ENCODE measurements at regions of chr2 and their contacts with region 1.

Region 1: GRCh38 chr2:157468931-157469708 is 25.2 kb upstream of the CYTIP start:
- DNase-seq: no peak
- ATAC-seq: peak; percentile 76
- H3K4me3 Mint-ChIP-seq: peak overlapping the region; percentile 72
- H3K27ac Mint-ChIP-seq: peak overlapping the region; percentile 99
- H3K4me1 Mint-ChIP-seq: peaks cover 96% of the 10 kb centered on the region
- H3K27me3 Mint-ChIP-seq: no peaks in the 10 kb centered on the region

Region 2: GRCh38 chr2:157377861-157378260 is 91.3 kb before region 1 on chr2:
- CTCF ChIA-PET with region 1: no interaction called
- POLR2A ChIA-PET with region 1: no interaction called
- DNase-seq: no peak
- ATAC-seq: no peak
- H3K4me3 Mint-ChIP-seq: no peak overlapping the region
- H3K27ac Mint-ChIP-seq: no peak overlapping the region
- H3K4me1 Mint-ChIP-seq: peaks cover 6% of the 10 kb centered on the region
- H3K27me3 Mint-ChIP-seq: no peaks in the 10 kb centered on the region

Region 3: DNA sequence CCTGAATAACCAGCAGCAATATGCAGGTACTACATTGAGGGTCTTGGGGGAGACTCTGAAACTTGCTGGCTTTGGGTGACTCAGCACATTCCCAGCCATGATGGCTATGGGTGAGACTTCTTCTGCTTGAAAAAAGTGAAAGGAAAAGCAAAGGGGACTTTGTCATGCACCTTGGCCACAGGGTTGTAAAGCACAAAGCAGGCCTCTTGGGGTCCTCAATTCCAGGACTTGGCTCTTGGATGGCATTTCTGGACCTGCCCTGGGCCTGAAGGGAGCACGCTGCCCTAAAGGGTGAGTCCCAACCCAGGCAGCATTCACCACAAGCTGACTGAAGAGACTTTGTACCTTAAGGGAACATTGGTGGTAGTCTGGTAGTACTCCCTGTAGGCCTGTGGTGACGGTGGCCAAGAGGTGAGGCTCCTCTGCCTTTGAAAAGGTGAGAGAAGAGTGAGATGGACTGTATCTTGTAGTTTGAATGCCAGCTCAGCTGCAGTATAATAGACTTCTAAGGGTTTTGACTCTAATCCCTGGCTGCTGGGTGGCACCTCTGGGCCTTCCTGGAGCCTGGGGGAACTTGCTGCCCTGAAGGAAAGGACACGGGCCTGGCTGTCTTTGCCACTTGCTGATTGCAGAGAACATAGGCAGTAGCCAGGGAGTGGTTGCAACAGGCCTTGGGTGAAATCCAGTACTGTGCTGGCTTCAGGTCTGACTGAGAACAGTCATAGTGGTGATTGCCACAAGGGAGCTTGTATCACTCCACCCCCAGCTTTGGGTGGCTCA is 11.3 kb after region 1 on chr2:
- CTCF ChIA-PET with region 1: interaction called, 9 read pairs
- POLR2A ChIA-PET with region 1: interaction called, 33 read pairs
- DNase-seq: peak; percentile 57
- ATAC-seq: peak; percentile 32
- H3K4me3 Mint-ChIP-seq: peak overlapping the region; percentile 80
- H3K27ac Mint-ChIP-seq: peak overlapping the region; percentile 98
- H3K4me1 Mint-ChIP-seq: peaks cover 79% of the 10 kb centered on the region
- H3K27me3 Mint-ChIP-seq: no peaks in the 10 kb centered on the region

Measured in activated CD8-positive, alpha-beta T cell treated with anti-CD3 and anti-CD28 coated beads, Interleukin-2, amount 10 ng/mL, durations not matched to agents 7 days and 5 days (primary cell).